ENCODE measurements at regions of chr2 and their contacts with region 1.

Region 1: GRCh38 chr2:27628767-27629709 is at the starts of genes CCDC121 and GPN1:
- DNase-seq: peak; percentile 88
- ATAC-seq: peak; percentile 98
- H3K4me3 ChIP-seq: peak within 1 kb of the TSS; percentile 83 to 99 (median 97)
- H3K27ac ChIP-seq: peak within 1 kb of the TSS; percentile 65
- H3K4me1 ChIP-seq: peaks cover 24% of the 10 kb centered on the region
- H3K27me3 ChIP-seq: no peaks in the 10 kb centered on the region; a peak in 1 of 5 replicates
- CTCF ChIP-seq: 0 out of 2 replicates have a peak, but pooled peaks have one; percentile 23
- EP300 ChIP-seq: peak in 1 of 2 experiments; percentile 37; a peak in 1 of 4 replicates
- POLR2A ChIP-seq: peak; percentile 94 to 97
- RAD21 ChIP-seq: peak; percentile 27; the same call in 1 of the 2 replicates
- total RNA-seq, gene CCDC121: 3.0 and 3.8 TPM in 2 replicates
- total RNA-seq, gene GPN1: 62.7 and 98.5 TPM in 2 replicates

Region 2: GRCh38 chr2:27582695-27583389 is 46.2 kb before region 1 on chr2 and contains the start of gene ZNF512:
- CTCF ChIA-PET with region 1: no interaction called
- POLR2A ChIA-PET with region 1: interaction called, 25 read pairs
- in situ Hi-C with region 1: no loop called
- intact Hi-C with region 1: no loop called
- DNase-seq: peak; percentile 96
- ATAC-seq: peak; percentile 98
- H3K4me3 ChIP-seq: peak within 1 kb of the TSS; percentile 69 to 97 (median 87)
- H3K27ac ChIP-seq: peak within 1 kb of the TSS; percentile 57
- H3K4me1 ChIP-seq: peaks cover 50% of the 10 kb centered on the region
- H3K27me3 ChIP-seq: no peaks in the 10 kb centered on the region; a peak in 1 of 5 replicates
- CTCF ChIP-seq: peak; percentile 25; the same call in 1 of the 2 replicates
- EP300 ChIP-seq: no peak; a peak in 1 of 4 replicates
- POLR2A ChIP-seq: peak; percentile 87 to 88
- RAD21 ChIP-seq: 0 out of 2 replicates have a peak, but pooled peaks have one; percentile 41
- total RNA-seq, gene ZNF512: 31.0 and 38.1 TPM in 2 replicates

Region 3: DNA sequence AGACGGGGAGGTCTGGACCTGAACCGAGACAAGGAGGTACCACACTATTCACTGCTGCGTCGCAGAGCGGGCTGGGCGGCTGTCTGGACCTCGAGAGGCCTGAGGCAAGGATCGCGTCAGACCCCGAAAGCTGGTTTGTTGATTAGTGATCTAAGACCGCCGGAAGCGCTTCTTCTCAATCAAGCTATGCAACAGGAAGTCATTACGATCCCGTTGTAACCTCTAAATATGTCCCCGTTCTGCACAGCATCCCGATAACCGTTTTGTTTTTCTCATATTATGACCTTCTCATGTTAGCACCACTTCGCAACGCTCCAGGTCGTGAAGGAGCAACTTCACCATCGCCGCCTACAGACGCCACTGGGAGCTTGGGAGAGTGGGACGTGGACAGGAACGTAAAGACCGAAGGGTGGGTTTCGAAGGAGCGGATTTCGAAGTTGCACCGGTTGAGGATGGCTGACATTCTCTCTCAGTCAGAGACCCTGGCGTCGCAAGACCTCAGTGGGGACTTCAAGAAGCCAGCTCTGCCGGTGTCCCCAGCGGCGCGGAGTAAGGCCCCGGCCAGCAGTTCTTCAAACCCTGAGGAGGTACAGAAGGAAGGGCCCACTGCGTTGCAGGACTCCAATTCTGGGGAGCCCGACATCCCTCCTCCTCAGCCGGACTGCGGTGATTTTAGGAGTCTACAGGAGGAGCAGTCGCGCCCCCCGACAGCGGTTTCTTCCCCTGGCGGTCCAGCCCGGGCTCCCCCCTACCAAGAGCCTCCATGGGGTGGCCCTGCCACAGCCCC is 34.6 kb after region 1 on chr2 and contains the starts of genes SLC4A1AP and SUPT7L:
- CTCF ChIA-PET with region 1: no interaction called
- POLR2A ChIA-PET with region 1: interaction called, 7 read pairs
- in situ Hi-C with region 1: no loop called
- intact Hi-C with region 1: loop called (anchors 5 kb)
- DNase-seq: peak; percentile 88
- ATAC-seq: peak; percentile 86
- H3K4me3 ChIP-seq: peak within 1 kb of the TSS; percentile 81 to 94 (median 84)
- H3K27ac ChIP-seq: peak within 1 kb of the TSS; percentile 83
- H3K4me1 ChIP-seq: peaks cover 28% of the 10 kb centered on the region
- H3K27me3 ChIP-seq: no peaks in the 10 kb centered on the region; a peak in 1 of 5 replicates
- CTCF ChIP-seq: peak; percentile 29
- EP300 ChIP-seq: no peak
- POLR2A ChIP-seq: peak; percentile 79 to 81
- RAD21 ChIP-seq: no peak
- total RNA-seq, gene SLC4A1AP: 44.6 and 59.0 TPM in 2 replicates
- total RNA-seq, gene SUPT7L: 28.7 and 32.9 TPM in 2 replicates